Activated B cell treated with CpG ODN at 0.5 μM for 24 hours (primary cell): ENCODE measurements at regions of chr6 and their contacts with region 1.

Region 1: DNA sequence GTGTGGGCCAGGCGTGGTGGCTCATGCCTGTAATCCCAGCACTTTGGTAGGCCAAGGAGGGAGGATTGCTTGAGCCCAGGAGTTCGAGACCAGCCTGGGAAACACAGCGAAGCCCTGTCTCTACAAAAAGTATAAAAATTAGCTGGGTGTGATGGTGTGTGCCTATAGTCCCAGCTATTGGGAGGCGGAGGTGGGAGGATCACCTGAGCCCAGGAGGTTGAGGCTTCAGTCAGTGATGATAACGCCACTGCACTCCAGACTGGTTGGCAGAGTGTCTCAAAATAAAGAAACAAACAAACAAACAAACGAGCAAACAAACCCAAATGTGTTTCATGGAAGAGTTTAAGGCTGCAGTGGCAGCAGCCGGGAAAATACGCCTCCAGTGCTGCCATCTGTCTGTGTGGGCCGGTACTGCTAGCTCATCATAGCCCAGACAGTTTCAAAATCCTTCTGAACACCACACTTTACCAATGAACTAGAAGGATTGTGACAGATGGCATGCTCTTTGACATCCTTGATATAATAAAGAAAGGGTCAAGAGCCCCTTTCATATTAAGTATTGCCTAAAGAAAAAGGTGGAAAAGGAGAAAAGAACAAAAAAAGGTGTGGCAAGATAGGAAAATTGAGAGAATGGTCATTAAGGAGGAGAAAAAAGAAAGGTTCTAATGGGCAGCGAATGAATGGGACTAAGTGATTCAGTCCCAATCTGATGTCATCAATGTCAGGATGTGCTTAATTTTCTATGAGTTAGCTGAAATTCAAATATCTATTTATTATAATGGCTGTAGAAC is 298.6 kb downstream of the SYNE1 start:
- DNase-seq: peak; percentile 40
- ATAC-seq: peak; percentile 71
- H3K4me3 Mint-ChIP-seq: no peak overlapping the region
- H3K27ac Mint-ChIP-seq: no peak overlapping the region
- H3K4me1 Mint-ChIP-seq: peaks cover 2% of the 10 kb centered on the region
- H3K27me3 Mint-ChIP-seq: no peaks in the 10 kb centered on the region
- CTCF ChIP-seq: peak; percentile 57

Region 2: DNA sequence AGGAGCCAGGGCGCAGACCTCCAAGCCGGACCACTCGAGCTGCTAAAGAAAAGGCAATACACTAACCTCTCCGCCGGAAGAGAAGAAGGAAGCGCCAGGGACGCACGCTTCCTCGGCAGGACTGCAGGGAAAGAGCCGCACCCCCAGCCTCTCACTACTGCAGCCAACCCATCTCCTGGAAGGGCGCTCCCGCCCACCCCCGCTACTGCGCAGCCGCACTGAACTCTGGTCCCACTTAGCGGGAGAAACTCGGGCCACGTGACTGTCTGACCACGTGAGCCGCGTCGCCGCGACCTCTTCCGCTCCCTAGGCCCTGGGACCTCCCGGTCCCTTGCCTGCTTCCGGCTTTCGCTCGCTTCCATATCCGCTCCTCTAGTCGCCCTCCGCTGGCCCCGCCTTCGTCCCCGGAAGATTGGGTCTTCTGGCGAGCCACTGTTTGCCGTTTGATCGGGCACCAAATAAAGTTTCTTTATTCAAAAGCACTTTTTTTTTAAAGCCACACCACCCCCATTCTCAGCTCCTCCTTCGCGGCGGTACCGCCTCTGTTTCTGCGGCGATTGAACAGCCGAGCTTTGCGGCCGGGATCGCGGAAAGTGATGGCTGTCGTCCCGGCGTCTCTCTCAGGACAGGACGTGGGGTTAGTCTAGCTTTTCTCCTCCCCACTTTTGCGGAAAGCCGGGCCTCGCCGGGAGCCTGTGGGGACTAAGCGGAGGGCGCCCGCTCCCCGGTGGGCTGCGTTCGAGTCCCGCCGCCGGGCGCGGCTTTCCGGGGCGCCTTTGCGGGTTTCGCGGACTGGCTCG is 886.4 kb before region 1 on chr6 and contains the start of gene RMND1:
- CTCF ChIA-PET with region 1: no interaction called
- POLR2A ChIA-PET with region 1: no interaction called
- intact Hi-C with region 1: no loop called
- DNase-seq: peak; percentile 96
- ATAC-seq: peak; percentile 96
- H3K4me3 Mint-ChIP-seq: peak within 1 kb of the TSS; percentile 97
- H3K27ac Mint-ChIP-seq: peak within 1 kb of the TSS; percentile 91
- H3K4me1 Mint-ChIP-seq: peaks cover 28% of the 10 kb centered on the region
- H3K27me3 Mint-ChIP-seq: no peaks in the 10 kb centered on the region
- CTCF ChIP-seq: no peak
- total RNA-seq, gene RMND1: 12.4 and 17.1 TPM in 2 replicates

Region 3: GRCh38 chr6:151675746-151676416 is 662.6 kb before region 1 on chr6:
- CTCF ChIA-PET with region 1: interaction called, 7 read pairs
- POLR2A ChIA-PET with region 1: no interaction called
- intact Hi-C with region 1: loop called (anchors 1 kb)
- DNase-seq: peak; percentile 32
- ATAC-seq: peak; percentile 89
- H3K4me3 Mint-ChIP-seq: no peak overlapping the region
- H3K27ac Mint-ChIP-seq: no peak overlapping the region
- H3K4me1 Mint-ChIP-seq: peaks cover 4% of the 10 kb centered on the region
- H3K27me3 Mint-ChIP-seq: no peaks in the 10 kb centered on the region
- CTCF ChIP-seq: peak; percentile 74

Region 4: DNA sequence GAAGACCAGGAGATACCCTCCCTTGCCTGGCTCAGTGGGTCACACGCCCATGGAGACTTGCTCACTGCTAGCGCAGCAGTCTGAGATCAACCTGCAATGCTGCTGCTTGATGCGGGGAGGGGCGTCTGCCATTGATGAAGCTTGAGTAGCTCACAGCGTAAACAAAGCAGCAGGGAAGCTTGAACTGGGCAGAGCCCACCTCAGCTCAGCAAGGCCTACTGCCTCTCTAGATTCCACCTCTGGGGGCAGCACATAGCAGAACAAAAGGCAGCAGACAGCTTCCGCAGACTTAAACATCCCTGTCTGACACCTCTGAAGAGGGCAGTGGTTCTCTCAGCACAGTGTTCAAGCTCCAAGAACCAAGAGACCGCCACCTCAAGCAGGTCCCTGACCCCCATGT is 259.7 kb before region 1 on chr6:
- CTCF ChIA-PET with region 1: no interaction called
- POLR2A ChIA-PET with region 1: no interaction called
- intact Hi-C with region 1: no loop called
- DNase-seq: no peak
- ATAC-seq: no peak
- H3K4me3 Mint-ChIP-seq: no peak overlapping the region
- H3K27ac Mint-ChIP-seq: no peak overlapping the region
- H3K4me1 Mint-ChIP-seq: no peaks in the 10 kb centered on the region
- H3K27me3 Mint-ChIP-seq: no peaks in the 10 kb centered on the region
- CTCF ChIP-seq: no peak

Region 5: GRCh38 chr6:152267967-152268845 is 70.3 kb before region 1 on chr6:
- CTCF ChIA-PET with region 1: no interaction called
- POLR2A ChIA-PET with region 1: no interaction called
- intact Hi-C with region 1: loop called (anchors 2 kb)
- DNase-seq: no peak
- ATAC-seq: no peak
- H3K4me3 Mint-ChIP-seq: no peak overlapping the region
- H3K27ac Mint-ChIP-seq: no peak overlapping the region
- H3K4me1 Mint-ChIP-seq: no peaks in the 10 kb centered on the region
- H3K27me3 Mint-ChIP-seq: no peaks in the 10 kb centered on the region
- CTCF ChIP-seq: no peak

Region 6: DNA sequence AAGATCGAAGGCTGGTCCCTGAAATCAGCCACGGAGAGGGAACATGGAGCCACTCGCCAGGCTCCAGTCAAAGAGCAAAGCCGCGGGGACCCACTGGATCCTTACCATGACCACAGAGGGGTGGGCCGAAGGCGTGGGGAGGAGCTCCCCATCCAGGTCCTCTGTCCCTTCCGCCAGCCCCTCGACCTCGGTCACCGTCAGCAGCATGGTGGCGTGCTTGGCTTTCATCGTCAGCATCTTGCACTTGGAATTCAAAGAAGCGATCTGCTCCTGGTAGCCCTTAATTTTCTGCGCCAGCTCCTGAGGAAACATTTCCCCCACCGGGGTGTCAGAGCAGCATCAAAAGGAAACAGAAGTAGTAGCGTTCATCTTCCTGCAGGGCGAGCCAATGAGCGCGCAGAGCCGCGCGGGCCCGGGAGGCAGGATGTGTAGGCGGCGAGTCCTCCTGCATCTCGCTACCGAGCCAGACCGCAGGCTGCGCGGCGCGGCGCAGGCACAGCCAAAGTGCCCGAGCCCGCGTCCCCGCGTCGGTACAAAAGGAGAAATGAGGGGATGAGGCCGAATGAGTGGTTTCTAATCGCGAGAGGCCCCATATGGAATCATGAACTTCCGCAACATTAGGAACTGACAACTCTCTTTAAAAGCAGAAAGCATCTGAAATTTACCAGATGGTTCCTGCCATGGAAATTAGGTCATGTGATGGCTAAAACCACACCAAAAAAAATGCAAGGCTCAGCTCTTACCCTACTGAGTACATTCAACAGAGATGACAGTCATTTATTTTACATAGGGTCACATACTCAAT is 36.6 kb before region 1 on chr6:
- CTCF ChIA-PET with region 1: interaction called, 41 read pairs
- POLR2A ChIA-PET with region 1: interaction called, 4 read pairs
- intact Hi-C with region 1: loop called (anchors 1 kb)
- DNase-seq: peak; percentile 82
- ATAC-seq: peak; percentile 97
- H3K4me3 Mint-ChIP-seq: peak overlapping the region; percentile 100
- H3K27ac Mint-ChIP-seq: peak overlapping the region; percentile 100
- H3K4me1 Mint-ChIP-seq: peaks cover 40% of the 10 kb centered on the region
- H3K27me3 Mint-ChIP-seq: no peaks in the 10 kb centered on the region
- CTCF ChIP-seq: no peak

Region 7: GRCh38 chr6:152323376-152323775 is 15.2 kb before region 1 on chr6:
- CTCF ChIA-PET with region 1: interaction called, 20 read pairs
- POLR2A ChIA-PET with region 1: no interaction called
- intact Hi-C with region 1: no loop called
- DNase-seq: no peak
- ATAC-seq: no peak
- H3K4me3 Mint-ChIP-seq: no peak overlapping the region
- H3K27ac Mint-ChIP-seq: no peak overlapping the region
- H3K4me1 Mint-ChIP-seq: no peaks in the 10 kb centered on the region
- H3K27me3 Mint-ChIP-seq: peaks cover 12% of the 10 kb centered on the region
- CTCF ChIP-seq: no peak

Region 8: GRCh38 chr6:152351110-152351509 is 12.6 kb after region 1 on chr6:
- CTCF ChIA-PET with region 1: interaction called, 11 read pairs
- POLR2A ChIA-PET with region 1: no interaction called
- intact Hi-C with region 1: no loop called
- DNase-seq: no peak
- ATAC-seq: no peak
- H3K4me3 Mint-ChIP-seq: no peak overlapping the region
- H3K27ac Mint-ChIP-seq: no peak overlapping the region
- H3K4me1 Mint-ChIP-seq: no peaks in the 10 kb centered on the region
- H3K27me3 Mint-ChIP-seq: peaks cover 3% of the 10 kb centered on the region
- CTCF ChIP-seq: no peak